ENCODE measurements at regions of chr22 and their contacts with region 1.

Region 1: GRCh38 chr22:23042179-23042578 is 28.1 kb upstream of the GNAZ start:
- DNase-seq: no peak
- ATAC-seq: no peak
- H3K4me3 ChIP-seq: no peak overlapping the region
- H3K27ac ChIP-seq: no peak overlapping the region
- H3K4me1 ChIP-seq: peaks cover 0 to 5% of the 10 kb centered on the region in 2 experiments; a peak in 1 of 5 replicates
- H3K27me3 ChIP-seq: peaks cover 4 to 20% of the 10 kb centered on the region in 2 experiments; a peak in 3 of 5 replicates
- CTCF ChIP-seq: no peak
- EP300 ChIP-seq: no peak
- POLR2A ChIP-seq: no peak
- RAD21 ChIP-seq: no peak

Region 2: DNA sequence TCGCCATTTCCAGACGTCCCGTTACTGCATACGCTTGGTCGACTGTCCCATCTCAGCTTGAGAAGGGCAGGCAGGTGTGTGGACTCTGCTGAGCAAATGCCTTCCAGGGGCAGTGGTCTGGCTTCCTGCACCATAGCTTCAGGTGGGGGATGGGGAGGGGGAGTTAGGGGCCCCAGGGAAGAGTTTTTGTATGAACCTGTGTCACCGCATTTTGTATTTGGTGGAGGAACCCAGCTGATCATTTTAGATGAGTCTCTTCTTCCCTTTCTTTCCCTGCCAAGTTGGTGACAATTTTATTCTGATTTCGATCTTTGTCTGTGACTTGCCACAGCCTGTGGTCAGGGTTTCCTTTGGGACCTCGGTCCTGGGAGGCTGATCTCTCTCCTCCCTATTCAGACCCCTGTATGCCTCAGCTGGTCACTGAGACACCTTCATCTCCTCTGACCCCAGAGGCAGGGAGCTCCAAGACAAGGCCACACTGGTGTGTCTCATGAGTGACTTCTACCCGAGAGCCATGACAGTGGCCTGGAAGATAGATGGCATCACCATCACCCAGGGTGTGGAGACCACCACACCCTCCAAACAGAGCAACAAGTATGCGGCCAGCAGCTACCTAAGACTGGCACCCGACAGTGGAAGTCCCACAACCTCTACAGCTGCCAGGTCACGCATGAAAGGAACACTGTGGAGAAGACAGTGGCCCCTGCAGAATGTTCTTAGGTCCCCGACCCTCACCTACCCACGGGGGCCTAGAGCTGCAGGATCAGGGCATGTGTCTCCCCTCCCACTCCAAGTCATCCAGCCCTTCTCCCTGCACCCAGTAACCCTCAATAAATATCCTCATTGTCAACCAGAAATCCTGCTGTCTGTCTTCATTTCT is 131.6 kb before region 1 on chr22:
- CTCF ChIA-PET with region 1: no interaction called
- POLR2A ChIA-PET with region 1: no interaction called
- in situ Hi-C with region 1: no loop called
- intact Hi-C with region 1: no loop called
- DNase-seq: peak in 3 of 4 experiments; percentile 58 to 59 (median 58)
- ATAC-seq: no peak
- H3K4me3 ChIP-seq: no peak overlapping the region
- H3K27ac ChIP-seq: no peak overlapping the region
- H3K4me1 ChIP-seq: no peaks in the 10 kb centered on the region
- H3K27me3 ChIP-seq: peaks cover 45 to 85% of the 10 kb centered on the region in 2 experiments
- CTCF ChIP-seq: no peak
- EP300 ChIP-seq: no peak
- POLR2A ChIP-seq: no peak
- RAD21 ChIP-seq: no peak

Region 3: GRCh38 chr22:23029521-23030228 is 12.5 kb before region 1 on chr22:
- CTCF ChIA-PET with region 1: no interaction called
- POLR2A ChIA-PET with region 1: interaction called, 83 read pairs
- in situ Hi-C with region 1: no loop called
- intact Hi-C with region 1: no loop called
- DNase-seq: peak in 2 of 4 experiments; percentile 44 to 59
- ATAC-seq: no peak
- H3K4me3 ChIP-seq: no peak overlapping the region
- H3K27ac ChIP-seq: no peak overlapping the region
- H3K4me1 ChIP-seq: peaks cover 0 to 4% of the 10 kb centered on the region in 2 experiments; a peak in 2 of 5 replicates
- H3K27me3 ChIP-seq: peaks cover 38 to 41% of the 10 kb centered on the region in 2 experiments
- CTCF ChIP-seq: peak in 1 of 3 experiments; percentile 32; a peak in 2 of 6 replicates
- EP300 ChIP-seq: no peak
- POLR2A ChIP-seq: no peak
- RAD21 ChIP-seq: no peak

Region 4: DNA sequence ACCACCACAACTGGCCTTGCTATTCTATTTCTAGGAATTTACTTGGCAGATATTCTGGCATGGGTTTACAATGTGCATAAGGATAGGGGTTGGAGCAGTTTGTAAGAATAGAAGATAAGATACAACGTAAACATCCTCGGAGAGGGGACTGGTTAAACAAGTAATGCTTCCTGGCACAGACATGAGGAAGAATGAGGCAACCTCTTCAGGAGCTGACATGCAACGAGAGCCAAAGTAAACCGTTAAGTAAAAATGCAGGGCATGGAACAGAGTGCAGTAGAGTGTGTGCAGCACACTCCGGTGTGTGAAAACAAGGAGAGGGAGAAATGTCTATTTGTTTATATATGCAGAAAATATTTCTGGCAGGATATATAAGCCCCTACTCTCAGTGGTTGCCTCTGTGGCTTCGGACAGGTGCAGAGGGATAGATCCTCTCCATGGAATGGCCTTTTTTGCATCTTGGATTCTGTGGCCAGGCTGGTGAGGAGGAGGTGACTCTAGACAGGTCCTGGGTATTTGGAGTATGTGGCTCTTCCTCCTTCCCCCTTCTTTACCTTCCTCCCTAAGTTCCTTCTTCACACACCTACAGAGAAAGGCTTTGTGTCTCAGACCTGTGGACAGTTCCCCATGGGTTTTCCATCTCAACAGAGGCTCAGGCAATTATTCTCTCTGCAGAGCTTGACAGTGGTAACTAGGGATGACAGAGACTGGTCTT is 105.6 kb after region 1 on chr22:
- CTCF ChIA-PET with region 1: no interaction called
- POLR2A ChIA-PET with region 1: no interaction called
- in situ Hi-C with region 1: no loop called
- intact Hi-C with region 1: no loop called
- DNase-seq: peak in 2 of 4 experiments; percentile 53 to 56
- ATAC-seq: no peak
- H3K4me3 ChIP-seq: no peak overlapping the region
- H3K27ac ChIP-seq: no peak overlapping the region
- H3K4me1 ChIP-seq: peaks cover 5 to 26% of the 10 kb centered on the region in 2 experiments
- H3K27me3 ChIP-seq: peaks cover 54 to 63% of the 10 kb centered on the region in 2 experiments
- CTCF ChIP-seq: no peak
- EP300 ChIP-seq: no peak
- POLR2A ChIP-seq: no peak
- RAD21 ChIP-seq: no peak